T-cell (primary cell): ENCODE measurements at regions of chr1 and their contacts with region 1.

Region 1: GRCh38 chr1:172602706-172603105 is 56.2 kb upstream of the FASLG start:
- DNase-seq: no peak
- ATAC-seq: no peak
- H3K4me3 ChIP-seq: no peak overlapping the region
- H3K4me3 Mint-ChIP-seq: no peak overlapping the region
- H3K27ac ChIP-seq: no peak overlapping the region
- H3K27ac Mint-ChIP-seq: peak overlapping the region in 1 of 2 donors; percentile 34
- H3K4me1 ChIP-seq: no peaks in the 10 kb centered on the region
- H3K4me1 Mint-ChIP-seq: peaks cover 2 to 16% (median 3%) of the 10 kb centered on the region in 3 donors
- H3K27me3 ChIP-seq: no peaks in the 10 kb centered on the region
- H3K27me3 Mint-ChIP-seq: no peaks in the 10 kb centered on the region

Region 2: GRCh38 chr1:174153085-174153825 is 1550.5 kb after region 1 on chr1:
- CTCF ChIA-PET with region 1: interaction called in 1 of 2 experiments, 12 read pairs
- POLR2A ChIA-PET with region 1: no interaction called
- DNase-seq: peak in 1 of 35 experiments; percentile 46
- ATAC-seq: peak; percentile 69 to 90 (median 76)
- H3K4me3 ChIP-seq: no peak overlapping the region
- H3K4me3 Mint-ChIP-seq: peak overlapping the region in 1 of 3 donors; percentile 53
- H3K27ac ChIP-seq: peak overlapping the region; percentile 56
- H3K27ac Mint-ChIP-seq: peak overlapping the region; percentile 84 to 89
- H3K4me1 ChIP-seq: peaks cover 6 to 26% of the 10 kb centered on the region in 2 experiments
- H3K4me1 Mint-ChIP-seq: peaks cover 16 to 49% (median 44%) of the 10 kb centered on the region in 3 donors
- H3K27me3 ChIP-seq: no peaks in the 10 kb centered on the region
- H3K27me3 Mint-ChIP-seq: no peaks in the 10 kb centered on the region